Thyroid gland (tissue), 4 donors: ENCODE measurements at regions of chr13 and their contacts with region 1.

Region 1: GRCh38 chr13:32639502-32640105 is 53.4 kb downstream of the PDS5B start:
- DNase-seq: peak; percentile 54 to 58
- H3K4me3 ChIP-seq: no peak overlapping the region
- H3K27ac ChIP-seq: no peak overlapping the region
- H3K4me1 ChIP-seq: no peaks in the 10 kb centered on the region
- H3K27me3 ChIP-seq: no peaks in the 10 kb centered on the region
- CTCF ChIP-seq: peak in 5 of 6 experiments; percentile 47 to 82 (median 74)
- POLR2A ChIP-seq: no peak

Region 2: GRCh38 chr13:32586080-32586900 is 53.3 kb before region 1 on chr13 and contains the start of gene PDS5B:
- intact Hi-C with region 1: loop called (anchors 5 kb)
- DNase-seq: peak; percentile 93 to 94
- H3K4me3 ChIP-seq: peak within 1 kb of the TSS; percentile 48 to 76 (median 72)
- H3K27ac ChIP-seq: peak within 1 kb of the TSS; percentile 79 to 96 (median 91)
- H3K4me1 ChIP-seq: peaks cover 3 to 5% of the 10 kb centered on the region in 2 donors
- H3K27me3 ChIP-seq: no peaks in the 10 kb centered on the region
- CTCF ChIP-seq: peak; percentile 44 to 99 (median 94)
- POLR2A ChIP-seq: peak in 1 of 2 donors; percentile 77
- total RNA-seq, gene PDS5B: 47.9 to 55.1 (median 49.3) TPM